ENCODE measurements at regions of chr19 and their contacts with region 1.

Region 1: GRCh38 chr19:30360376-30361106 is 11.6 kb upstream of the ZNF536 start:
- DNase-seq: peak in 13 of 42 donors; percentile 2 to 62 (median 27)

Region 2: DNA sequence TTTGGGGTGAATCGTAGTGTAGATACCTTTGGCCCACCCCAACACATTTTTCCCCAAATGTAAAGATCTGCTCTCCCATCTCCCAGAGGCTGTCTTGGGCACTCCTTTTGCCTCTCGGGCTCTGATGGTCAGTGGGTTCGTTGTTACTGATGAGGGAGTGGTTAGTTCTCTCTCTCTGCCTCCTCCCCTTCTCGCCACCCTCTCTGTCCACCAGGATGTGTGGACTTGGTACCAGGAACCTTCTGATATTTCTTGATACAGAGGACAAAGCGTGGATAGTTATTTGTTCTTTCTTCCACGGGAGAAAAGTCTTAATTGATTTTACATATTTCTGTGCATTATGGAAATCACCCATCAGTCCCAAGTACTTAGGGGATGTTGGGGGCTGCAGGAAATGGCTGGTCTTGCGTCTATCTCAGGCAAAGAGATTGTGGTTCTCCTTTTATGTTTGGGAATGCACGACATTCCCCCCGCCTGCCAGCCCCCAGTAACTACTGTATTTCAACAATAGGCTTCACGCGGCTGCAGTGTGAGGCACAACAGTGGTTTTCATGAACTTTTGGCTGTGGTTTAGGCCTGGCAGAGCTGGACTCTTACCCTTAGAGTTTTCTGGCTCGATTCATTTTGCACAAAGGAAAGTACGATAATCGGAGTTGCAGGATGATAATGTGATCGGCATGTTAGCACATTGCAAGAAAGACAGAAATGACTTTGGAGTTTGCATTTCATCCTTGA is 67.3 kb before region 1 on chr19:
- intact Hi-C with region 1: loop called (anchors 5 kb)
- DNase-seq: peak; percentile 27 to 89 (median 66)

Region 3: DNA sequence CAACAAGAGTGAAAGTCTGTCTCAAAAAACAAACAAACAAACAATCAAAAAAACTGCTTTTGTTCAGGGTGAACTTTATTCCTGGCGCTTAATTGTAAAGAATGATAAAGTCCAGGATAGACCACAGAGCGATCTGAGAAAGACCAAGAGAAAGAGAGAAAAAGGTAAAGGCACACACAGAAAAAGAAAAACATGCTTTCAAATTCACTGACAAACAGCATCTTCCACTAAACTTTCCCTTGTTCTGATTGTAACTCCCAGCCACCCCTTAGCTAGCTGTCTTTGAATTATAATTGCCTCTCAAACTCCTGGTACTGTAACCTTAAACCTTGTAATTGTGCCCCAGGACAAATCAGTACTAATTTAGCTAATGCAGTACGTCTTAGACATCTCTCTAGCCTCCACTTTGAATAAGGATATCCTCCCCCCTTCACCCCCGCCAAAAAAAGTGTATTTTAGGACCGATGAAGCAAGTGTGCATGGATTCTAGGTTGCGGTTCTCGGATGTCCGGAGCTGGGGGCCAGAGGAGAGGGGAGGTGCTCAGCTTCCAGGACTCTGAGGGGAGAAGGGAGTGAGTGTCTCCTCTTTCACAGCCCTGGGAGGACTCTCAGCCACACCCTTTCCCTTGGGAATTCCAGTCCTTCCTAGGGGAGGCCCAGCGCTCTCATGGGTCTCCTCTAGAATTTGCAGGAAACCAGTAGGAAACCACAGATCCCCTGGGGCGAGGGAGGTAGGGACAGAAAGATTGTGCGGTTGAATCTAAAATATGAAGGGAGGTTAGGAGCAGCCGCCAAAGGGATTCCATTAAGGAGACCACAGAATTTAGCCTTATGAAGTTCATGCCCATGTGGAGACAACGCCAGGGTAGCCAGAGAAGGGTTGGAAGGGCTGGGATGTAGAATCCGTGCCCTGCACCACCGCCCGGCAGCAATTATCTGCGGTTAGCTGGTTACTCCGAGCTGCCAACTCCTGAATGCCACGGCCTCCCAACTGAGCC is 31.3 kb after region 1 on chr19:
- intact Hi-C with region 1: no loop called
- DNase-seq: peak in 1 of 42 donors; percentile 34